ENCODE measurements at regions of chr7 and their contacts with region 1.

Region 1: GRCh38 chr7:151304856-151305255 is 36.8 kb upstream of the NUB1 start:
- DNase-seq: no peak
- H3K4me3 ChIP-seq: no peak overlapping the region
- H3K27ac ChIP-seq: no peak overlapping the region
- H3K4me1 ChIP-seq: peaks cover 1% of the 10 kb centered on the region
- H3K27me3 ChIP-seq: no peaks in the 10 kb centered on the region
- CTCF ChIP-seq: no peak
- EP300 ChIP-seq: no peak
- POLR2A ChIP-seq: no peak

Region 2: GRCh38 chr7:151123822-151124464 is 180.9 kb before region 1 on chr7:
- intact Hi-C with region 1: loop called in 3 of 4 experiments (anchors 1 to 5 kb)
- DNase-seq: peak; percentile 77 to 88 (median 88)
- H3K4me3 ChIP-seq: no peak overlapping the region
- H3K27ac ChIP-seq: no peak overlapping the region
- H3K4me1 ChIP-seq: peaks cover 8% of the 10 kb centered on the region
- H3K27me3 ChIP-seq: no peaks in the 10 kb centered on the region
- CTCF ChIP-seq: peak; percentile 88 to 93 (median 90)
- EP300 ChIP-seq: no peak
- POLR2A ChIP-seq: no peak

Region 3: DNA sequence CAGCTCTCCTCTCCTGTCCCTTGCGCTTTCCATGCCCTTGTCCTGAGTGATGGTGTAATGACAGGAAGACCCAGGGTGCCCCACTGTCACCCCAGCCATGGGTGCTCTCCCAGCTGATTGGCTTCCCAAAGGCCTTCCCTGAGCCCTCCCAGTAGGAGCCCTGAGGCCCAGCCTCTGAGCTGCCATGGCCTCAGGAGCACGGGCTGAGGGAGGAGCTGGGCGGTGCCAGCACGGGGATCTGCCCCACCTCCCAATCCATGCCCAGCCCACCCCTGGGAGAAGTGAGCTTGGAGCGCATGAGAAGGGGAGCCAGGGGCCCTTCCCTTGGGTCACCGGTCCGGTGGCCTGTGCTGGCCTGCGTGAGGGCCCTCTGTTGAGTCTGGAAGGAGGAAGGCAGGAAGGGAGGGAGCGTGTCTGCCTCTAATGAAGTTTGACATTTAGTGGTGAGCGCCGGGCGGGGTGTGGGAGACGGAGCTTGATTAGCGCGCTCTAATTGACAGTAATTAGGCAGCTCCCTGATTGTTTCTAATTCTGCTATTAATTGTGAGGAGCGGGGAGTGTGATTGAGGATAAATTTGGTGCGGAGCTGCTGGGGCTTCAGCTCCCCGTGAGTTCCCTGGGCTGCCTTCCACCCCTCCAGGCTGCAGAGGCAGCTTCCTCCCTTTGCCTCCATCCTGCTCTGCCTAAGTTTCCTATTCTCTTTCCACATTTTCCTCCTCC is 165.6 kb before region 1 on chr7:
- intact Hi-C with region 1: loop called in 1 of 4 experiments (anchors 10 kb)
- DNase-seq: no peak
- H3K4me3 ChIP-seq: no peak overlapping the region
- H3K27ac ChIP-seq: no peak overlapping the region
- H3K4me1 ChIP-seq: no peaks in the 10 kb centered on the region
- H3K27me3 ChIP-seq: no peaks in the 10 kb centered on the region
- CTCF ChIP-seq: no peak
- EP300 ChIP-seq: no peak
- POLR2A ChIP-seq: no peak

Region 4: GRCh38 chr7:151172273-151173141 is 132.3 kb before region 1 on chr7:
- intact Hi-C with region 1: loop called in 1 of 4 experiments (anchors 2 kb)
- DNase-seq: peak; percentile 65 to 88 (median 78)
- H3K4me3 ChIP-seq: no peak overlapping the region
- H3K27ac ChIP-seq: no peak overlapping the region
- H3K4me1 ChIP-seq: no peaks in the 10 kb centered on the region
- H3K27me3 ChIP-seq: no peaks in the 10 kb centered on the region
- CTCF ChIP-seq: peak; percentile 98 to 100 (median 98)
- EP300 ChIP-seq: no peak
- POLR2A ChIP-seq: no peak

Region 5: GRCh38 chr7:151244196-151244840 is 60.5 kb before region 1 on chr7:
- intact Hi-C with region 1: loop called in 3 of 4 experiments (anchors 2 to 5 kb)
- DNase-seq: peak in 2 of 5 donors; percentile 52 to 60
- H3K4me3 ChIP-seq: no peak overlapping the region
- H3K27ac ChIP-seq: no peak overlapping the region
- H3K4me1 ChIP-seq: peaks cover 13% of the 10 kb centered on the region
- H3K27me3 ChIP-seq: no peaks in the 10 kb centered on the region
- CTCF ChIP-seq: peak; percentile 45 to 57 (median 52)
- EP300 ChIP-seq: no peak
- POLR2A ChIP-seq: no peak

Region 6: DNA sequence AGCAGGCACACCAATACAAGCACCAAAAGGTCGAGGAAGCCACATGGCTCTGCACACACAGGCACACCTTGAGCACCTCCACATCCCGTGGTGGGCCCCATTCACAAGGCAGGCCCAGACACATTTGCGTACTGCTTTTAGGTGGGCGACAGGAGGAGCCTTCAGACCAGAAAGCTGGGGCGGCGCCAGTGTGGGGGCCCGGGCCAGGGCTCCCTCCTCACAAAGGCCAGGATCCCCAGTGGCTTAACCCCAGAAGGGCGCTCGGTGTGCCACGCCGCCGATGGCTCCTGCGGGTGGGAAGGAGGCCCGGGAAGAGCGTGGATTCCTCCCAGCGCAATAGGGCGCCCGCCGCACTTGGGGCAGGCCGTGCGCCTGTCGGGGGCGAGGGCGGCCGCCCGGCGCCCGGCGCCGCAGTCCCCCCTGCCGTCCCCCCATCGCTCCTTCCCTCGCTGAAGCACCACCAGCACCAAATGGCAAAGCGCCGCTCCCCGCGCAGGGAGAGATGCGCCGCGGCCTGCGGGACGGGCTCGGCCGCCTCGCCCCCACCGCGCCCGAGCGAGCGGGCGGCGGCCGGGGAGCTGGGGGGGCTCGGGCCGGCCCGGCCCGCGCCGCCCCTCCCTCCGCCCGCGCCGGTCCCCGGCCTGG is 53.4 kb before region 1 on chr7:
- intact Hi-C with region 1: loop called in 3 of 4 experiments (anchors 5 kb)
- DNase-seq: peak in 4 of 5 donors; percentile 62 to 83 (median 79)
- H3K4me3 ChIP-seq: peak overlapping the region; percentile 72
- H3K27ac ChIP-seq: peak overlapping the region; percentile 83 to 99
- H3K4me1 ChIP-seq: peaks cover 27% of the 10 kb centered on the region
- H3K27me3 ChIP-seq: no peaks in the 10 kb centered on the region
- CTCF ChIP-seq: peak in 1 of 3 donors; percentile 7
- EP300 ChIP-seq: no peak
- POLR2A ChIP-seq: no peak

Region 7: DNA sequence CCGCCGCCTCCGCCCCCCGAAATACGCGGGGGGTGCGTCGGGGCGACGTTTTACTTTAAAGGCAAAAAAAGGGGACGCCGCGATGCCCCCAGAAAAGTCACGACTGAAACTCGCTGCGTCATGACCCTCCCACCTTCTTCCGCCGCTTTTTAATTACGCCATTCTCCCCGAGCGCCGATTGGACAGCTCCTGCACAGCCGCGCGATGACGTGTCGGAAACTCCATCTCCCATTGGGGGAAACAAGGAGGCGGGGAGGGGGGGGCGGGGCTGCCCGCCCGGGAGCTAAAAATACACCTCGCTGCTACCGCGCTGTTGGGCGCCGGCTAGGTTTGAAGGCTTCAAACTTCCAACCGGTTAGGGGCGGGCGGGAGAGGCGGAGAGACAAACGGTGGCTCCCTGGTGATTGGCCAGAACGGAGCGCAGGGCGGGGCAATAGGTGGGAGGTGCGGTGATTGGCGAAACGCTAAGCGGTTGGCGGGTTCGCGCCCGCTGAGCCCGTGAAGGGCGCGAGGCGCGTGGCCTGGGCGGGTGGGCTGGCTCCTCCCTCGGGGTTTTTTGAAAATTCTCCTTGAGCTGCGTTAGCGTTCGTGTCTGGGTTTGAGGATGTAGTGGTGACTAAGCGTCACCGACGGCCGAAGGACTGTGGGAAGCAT is 215.0 kb after region 1 on chr7 and contains the start of gene RHEB:
- intact Hi-C with region 1: no loop called
- DNase-seq: peak; percentile 98 to 99 (median 99)
- H3K4me3 ChIP-seq: peak within 1 kb of the TSS; percentile 72
- H3K27ac ChIP-seq: peak within 1 kb of the TSS; percentile 98 to 100
- H3K4me1 ChIP-seq: peaks cover 14% of the 10 kb centered on the region
- H3K27me3 ChIP-seq: no peaks in the 10 kb centered on the region
- CTCF ChIP-seq: no peak
- EP300 ChIP-seq: no peak
- POLR2A ChIP-seq: peak; percentile 43
- total RNA-seq, gene RHEB: 85.1 to 106 (median 91.8) TPM